Common myeloid progenitor, CD34-positive (primary cell): ENCODE measurements at regions of chr1 and their contacts with region 1.

Region 1: GRCh38 chr1:236795757-236796725 is 949 bp downstream of the MTR start:
- DNase-seq: peak in 2 of 3 donors; percentile 52 to 75
- H3K4me3 ChIP-seq: peak overlapping the region; percentile 57 to 97 (median 88)
- H3K27ac ChIP-seq: peak overlapping the region; percentile 52 to 89
- H3K4me1 ChIP-seq: peaks cover 0 to 30% (median 9%) of the 10 kb centered on the region in 4 experiments
- H3K27me3 ChIP-seq: peaks cover 0 to 4% (median 0%) of the 10 kb centered on the region in 5 experiments

Region 2: GRCh38 chr1:236779312-236779711 is 16.7 kb before region 1 on chr1:
- CTCF ChIA-PET with region 1: no interaction called
- POLR2A ChIA-PET with region 1: no interaction called
- DNase-seq: peak in 1 of 3 donors; percentile 8
- H3K4me3 ChIP-seq: no peak overlapping the region
- H3K27ac ChIP-seq: no peak overlapping the region
- H3K4me1 ChIP-seq: no peaks in the 10 kb centered on the region
- H3K27me3 ChIP-seq: no peaks in the 10 kb centered on the region

Region 3: GRCh38 chr1:236808564-236809130 is 12.6 kb after region 1 on chr1:
- CTCF ChIA-PET with region 1: interaction called, 10 read pairs
- POLR2A ChIA-PET with region 1: no interaction called
- DNase-seq: peak; percentile 34 to 75 (median 73)
- H3K4me3 ChIP-seq: no peak overlapping the region
- H3K27ac ChIP-seq: peak overlapping the region in 1 of 2 experiments; percentile 67
- H3K4me1 ChIP-seq: peaks cover 0 to 25% (median 4%) of the 10 kb centered on the region in 4 experiments
- H3K27me3 ChIP-seq: no peaks in the 10 kb centered on the region

Region 4: GRCh38 chr1:237226172-237226944 is 430.3 kb after region 1 on chr1:
- CTCF ChIA-PET with region 1: no interaction called
- POLR2A ChIA-PET with region 1: no interaction called
- DNase-seq: no peak
- H3K4me3 ChIP-seq: no peak overlapping the region
- H3K27ac ChIP-seq: no peak overlapping the region
- H3K4me1 ChIP-seq: no peaks in the 10 kb centered on the region
- H3K27me3 ChIP-seq: no peaks in the 10 kb centered on the region